GM12878 (cell line): ENCODE measurements at regions of chr5 and their contacts with region 1.

Region 1: DNA sequence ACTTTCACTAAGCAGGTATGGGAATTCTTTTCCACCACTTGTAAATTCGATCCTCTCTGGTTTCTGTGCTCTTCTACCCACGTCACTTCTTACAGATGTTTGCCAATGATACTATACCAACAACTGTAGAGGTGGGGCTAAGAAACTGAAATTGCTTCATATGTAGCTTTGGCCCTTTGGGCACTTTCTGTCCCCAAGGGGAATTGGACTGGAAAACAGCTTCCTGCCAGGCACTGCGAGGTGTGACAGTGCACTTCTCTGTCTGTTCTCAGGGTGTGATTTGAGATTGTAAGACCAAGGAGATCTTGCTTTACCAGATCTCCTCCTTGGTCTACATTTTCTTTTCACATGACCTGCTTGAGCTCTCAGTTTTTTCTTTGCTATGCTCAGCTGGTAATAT is 164.2 kb downstream of the CCDC192 start:
- DNase-seq: no peak
- ATAC-seq: peak; percentile 79
- H3K4me3 ChIP-seq: no peak overlapping the region
- H3K27ac ChIP-seq: no peak overlapping the region
- H3K4me1 ChIP-seq: no peaks in the 10 kb centered on the region
- H3K27me3 ChIP-seq: no peaks in the 10 kb centered on the region
- CTCF ChIP-seq: no peak
- EP300 ChIP-seq: no peak
- POLR2A ChIP-seq: no peak
- RAD21 ChIP-seq: no peak

Region 2: DNA sequence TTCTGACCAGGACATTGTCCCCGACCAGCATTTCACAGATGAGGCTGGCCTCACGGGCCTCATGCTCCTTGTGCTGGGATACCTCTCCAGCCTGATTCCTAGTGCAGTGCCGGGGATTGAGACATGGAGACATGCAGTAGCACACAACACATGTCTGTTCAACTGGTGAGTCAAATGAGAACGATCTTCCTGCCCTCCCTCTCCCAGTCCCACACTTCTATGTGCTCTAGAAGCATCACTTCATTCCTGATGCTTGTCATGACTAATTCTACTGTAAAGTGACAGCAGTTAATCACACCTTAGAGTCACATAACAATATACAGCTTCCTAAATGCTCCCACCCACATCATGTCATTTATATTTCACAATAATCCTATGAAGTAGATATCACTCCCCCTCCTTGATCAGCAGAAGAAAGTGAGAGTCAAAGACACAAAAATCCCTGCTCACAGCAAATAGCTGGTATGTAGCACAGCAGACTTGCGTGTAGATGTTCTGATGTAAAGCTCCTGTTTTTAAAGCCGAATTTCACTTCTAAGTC is 62.4 kb before region 1 on chr5:
- CTCF ChIA-PET with region 1: no interaction called
- POLR2A ChIA-PET with region 1: no interaction called
- RAD21 ChIA-PET with region 1: no interaction called
- SMC1A ChIA-PET with region 1: interaction called, 12 read pairs
- in situ Hi-C with region 1: no loop called
- intact Hi-C with region 1: no loop called
- DNase-seq: no peak
- ATAC-seq: no peak
- H3K4me3 ChIP-seq: no peak overlapping the region
- H3K27ac ChIP-seq: no peak overlapping the region
- H3K4me1 ChIP-seq: no peaks in the 10 kb centered on the region
- H3K27me3 ChIP-seq: no peaks in the 10 kb centered on the region; a peak in 1 of 4 replicates
- CTCF ChIP-seq: no peak
- EP300 ChIP-seq: no peak
- POLR2A ChIP-seq: no peak
- RAD21 ChIP-seq: no peak

Region 3: GRCh38 chr5:127833999-127834953 is 33.1 kb before region 1 on chr5:
- CTCF ChIA-PET with region 1: interaction called, 15 read pairs
- POLR2A ChIA-PET with region 1: no interaction called
- RAD21 ChIA-PET with region 1: interaction called, 4 read pairs
- SMC1A ChIA-PET with region 1: interaction called, 5 read pairs
- in situ Hi-C with region 1: no loop called
- intact Hi-C with region 1: no loop called
- DNase-seq: no peak
- ATAC-seq: peak; percentile 65
- H3K4me3 ChIP-seq: no peak overlapping the region
- H3K27ac ChIP-seq: no peak overlapping the region
- H3K4me1 ChIP-seq: no peaks in the 10 kb centered on the region
- H3K27me3 ChIP-seq: no peaks in the 10 kb centered on the region
- CTCF ChIP-seq: no peak; a peak in 1 of 6 replicates
- EP300 ChIP-seq: no peak
- POLR2A ChIP-seq: no peak
- RAD21 ChIP-seq: 0 out of 2 replicates have a peak, but pooled peaks have one; percentile 10

Region 4: DNA sequence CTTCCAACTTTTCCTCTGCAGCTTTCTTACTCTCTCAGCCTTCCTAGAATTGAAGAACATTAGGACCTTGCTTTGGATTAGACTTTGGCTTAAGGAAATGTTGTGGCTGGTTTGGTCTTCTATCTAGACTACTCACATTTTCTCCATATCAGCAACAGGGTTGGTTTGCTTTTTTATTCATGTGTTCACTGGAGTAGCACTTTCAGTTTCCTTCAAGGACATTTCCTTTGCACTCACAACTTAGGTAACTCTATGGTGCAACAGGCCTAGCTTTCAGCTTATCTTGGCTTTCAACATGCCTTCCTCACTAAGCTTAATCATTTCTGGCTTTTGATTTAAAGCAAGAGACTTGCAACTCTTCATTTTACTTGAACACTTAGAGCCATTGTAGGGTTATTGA is 11.1 kb before region 1 on chr5:
- CTCF ChIA-PET with region 1: interaction called, 10 read pairs
- POLR2A ChIA-PET with region 1: interaction called, 3 read pairs
- RAD21 ChIA-PET with region 1: interaction called, 3 read pairs
- SMC1A ChIA-PET with region 1: interaction called, 20 read pairs
- in situ Hi-C with region 1: no loop called
- intact Hi-C with region 1: no loop called
- DNase-seq: no peak
- ATAC-seq: peak; percentile 35; the same call in 1 of the 3 replicates
- H3K4me3 ChIP-seq: no peak overlapping the region
- H3K27ac ChIP-seq: no peak overlapping the region
- H3K4me1 ChIP-seq: no peaks in the 10 kb centered on the region
- H3K27me3 ChIP-seq: no peaks in the 10 kb centered on the region
- CTCF ChIP-seq: no peak
- EP300 ChIP-seq: no peak
- POLR2A ChIP-seq: no peak
- RAD21 ChIP-seq: no peak